ENCODE measurements at regions of chr22 and their contacts with region 1.

Region 1: DNA sequence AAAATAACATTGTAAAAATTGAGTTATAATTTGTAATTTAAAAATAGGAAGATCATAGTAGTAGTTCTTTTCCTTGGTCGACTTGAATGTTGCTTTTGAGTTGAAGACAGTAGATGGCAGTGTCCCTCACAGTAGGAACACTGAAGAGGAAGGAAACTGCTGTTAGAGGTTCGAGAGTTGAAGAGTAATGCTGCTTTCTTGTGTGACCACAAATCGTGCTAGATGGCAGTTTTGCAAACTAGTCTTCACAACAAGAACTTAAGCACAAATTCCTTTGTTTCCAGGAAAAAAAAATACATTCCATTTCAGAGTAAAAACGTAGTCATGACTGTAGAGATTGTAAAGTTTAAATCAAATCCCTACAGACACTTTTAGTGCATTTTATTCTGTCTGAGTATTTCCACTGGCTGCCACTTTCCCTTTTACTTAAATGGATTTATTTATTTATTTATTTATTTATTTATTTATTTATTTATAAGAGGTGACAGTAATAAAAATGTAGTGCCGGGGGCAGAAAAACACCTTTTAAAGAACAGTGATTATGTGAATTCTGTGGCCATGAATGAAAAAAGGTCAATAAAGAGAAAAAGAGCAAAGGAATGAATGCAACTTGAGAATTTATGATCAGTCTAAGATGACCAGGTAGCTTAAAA is 54.6 kb downstream of the SPECC1L start:
- DNase-seq: peak in 1 of 5 donors; percentile 36
- ATAC-seq: peak in 3 of 4 donors; percentile 79 to 89 (median 82)
- H3K4me3 ChIP-seq: no peak overlapping the region
- H3K27ac ChIP-seq: peak overlapping the region in 1 of 12 donors; percentile 54
- H3K4me1 ChIP-seq: peaks cover 0 to 38% (median 15%) of the 10 kb centered on the region in 12 donors
- H3K27me3 ChIP-seq: no peaks in the 10 kb centered on the region
- CTCF ChIP-seq: peak; percentile 61 to 88 (median 74)
- POLR2A ChIP-seq: no peak

Region 2: DNA sequence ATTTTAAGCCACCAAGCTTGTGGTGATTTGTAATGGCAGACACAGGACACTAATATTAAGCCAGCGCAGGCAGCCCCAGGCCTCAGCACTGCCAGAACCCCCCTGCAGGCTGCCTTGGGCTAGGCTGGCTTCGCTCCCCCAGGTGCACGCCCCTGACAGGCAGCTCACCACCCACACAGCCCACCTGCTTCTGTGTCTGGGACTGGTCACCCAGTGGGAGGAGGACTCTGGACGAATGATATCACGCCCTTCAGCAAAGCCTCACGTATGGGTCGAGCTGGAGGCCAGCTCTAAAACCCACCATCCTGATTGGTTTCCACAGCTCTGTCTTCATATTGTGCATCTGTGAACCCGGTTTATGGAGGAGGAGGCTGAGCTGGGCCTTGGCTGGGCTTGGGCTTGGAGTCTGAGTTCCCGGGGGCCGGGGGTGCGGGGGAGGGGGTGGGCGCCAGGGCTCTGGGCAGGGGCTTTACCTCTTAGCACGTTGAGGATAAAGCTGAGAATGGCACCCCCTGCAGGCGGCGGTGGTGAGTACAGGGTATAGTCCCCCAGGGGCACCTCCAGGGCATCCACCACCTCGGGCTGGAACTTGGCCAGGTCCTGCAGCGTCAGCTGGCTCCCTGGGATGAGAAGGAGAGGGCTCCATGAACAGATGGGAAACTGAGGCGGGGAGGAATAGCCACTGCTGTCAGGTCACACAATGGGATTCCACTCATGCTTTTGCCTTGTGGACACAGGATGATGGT is 94.1 kb before region 1 on chr22:
- intact Hi-C with region 1: no loop called
- DNase-seq: peak in 2 of 5 donors; percentile 50 to 76
- ATAC-seq: peak in 3 of 4 donors; percentile 14 to 48 (median 38)
- H3K4me3 ChIP-seq: no peak overlapping the region
- H3K27ac ChIP-seq: no peak overlapping the region
- H3K4me1 ChIP-seq: peaks cover 0 to 10% (median 0%) of the 10 kb centered on the region in 12 donors
- H3K27me3 ChIP-seq: no peaks in the 10 kb centered on the region
- CTCF ChIP-seq: peak in 8 of 12 donors; percentile 9 to 40 (median 23)
- POLR2A ChIP-seq: no peak

Region 3: GRCh38 chr22:24379536-24379935 is 54.3 kb after region 1 on chr22:
- intact Hi-C with region 1: no loop called
- DNase-seq: no peak
- ATAC-seq: no peak
- H3K4me3 ChIP-seq: no peak overlapping the region
- H3K27ac ChIP-seq: peak overlapping the region in 2 of 12 donors; percentile 12 to 35
- H3K4me1 ChIP-seq: peaks cover 0 to 20% (median 5%) of the 10 kb centered on the region in 12 donors
- H3K27me3 ChIP-seq: no peaks in the 10 kb centered on the region
- CTCF ChIP-seq: no peak
- POLR2A ChIP-seq: no peak

Region 4: GRCh38 chr22:24402460-24403192 is 77.4 kb after region 1 on chr22:
- intact Hi-C with region 1: loop called in 2 of 10 experiments (anchors 5 to 10 kb)
- DNase-seq: peak; percentile 80 to 91 (median 87)
- ATAC-seq: peak; percentile 91 to 94 (median 93)
- H3K4me3 ChIP-seq: peak overlapping the region in 5 of 12 donors; percentile 14 to 37 (median 21)
- H3K27ac ChIP-seq: peak overlapping the region; percentile 47 to 93 (median 82)
- H3K4me1 ChIP-seq: peaks cover 0 to 72% (median 64%) of the 10 kb centered on the region in 12 donors
- H3K27me3 ChIP-seq: no peaks in the 10 kb centered on the region
- CTCF ChIP-seq: no peak
- POLR2A ChIP-seq: no peak

Region 5: DNA sequence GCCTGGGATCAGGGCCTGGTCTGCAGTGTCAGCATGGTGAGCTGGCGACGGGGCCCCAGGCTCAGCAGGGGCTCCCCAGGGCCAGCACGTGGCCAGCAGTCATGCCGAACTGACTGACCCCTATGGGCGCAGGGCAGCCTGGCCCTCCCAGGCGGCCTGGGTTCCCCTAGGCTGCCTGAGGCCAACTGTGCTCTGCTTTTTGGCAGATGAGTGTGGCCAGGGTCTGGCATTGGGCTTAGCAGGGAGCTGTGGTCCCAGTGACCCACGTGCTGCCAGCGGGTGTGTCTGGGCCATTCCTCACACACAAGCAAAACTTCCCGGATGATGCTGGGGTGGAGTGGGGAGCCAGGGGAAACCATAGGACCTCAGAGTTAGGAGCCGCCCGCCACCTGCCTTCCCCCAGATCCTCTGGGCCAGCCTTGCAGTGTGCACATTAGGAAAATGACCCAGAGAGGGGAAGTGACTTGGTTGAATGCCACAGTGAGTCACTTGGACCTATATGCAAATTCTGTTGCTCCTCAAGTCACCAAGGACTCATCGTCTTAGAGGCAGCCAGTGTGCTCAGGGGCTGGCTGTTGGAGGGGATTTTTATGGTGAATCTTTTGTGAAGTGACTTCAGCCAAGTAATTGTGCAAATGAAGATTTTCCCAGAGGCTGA is 108.7 kb after region 1 on chr22:
- intact Hi-C with region 1: loop called in 1 of 10 experiments (anchors 5 kb)
- DNase-seq: peak in 2 of 5 donors; percentile 49 to 56
- ATAC-seq: peak in 3 of 4 donors; percentile 16 to 33 (median 21)
- H3K4me3 ChIP-seq: no peak overlapping the region
- H3K27ac ChIP-seq: peak overlapping the region in 11 of 12 donors; percentile 30 to 82 (median 68)
- H3K4me1 ChIP-seq: peaks cover 6 to 87% (median 64%) of the 10 kb centered on the region in 12 donors
- H3K27me3 ChIP-seq: no peaks in the 10 kb centered on the region
- CTCF ChIP-seq: no peak
- POLR2A ChIP-seq: no peak

Region 6: GRCh38 chr22:24503137-24503842 is 178.1 kb after region 1 on chr22:
- intact Hi-C with region 1: loop called in 6 of 10 experiments (anchors 5 to 10 kb)
- DNase-seq: peak; percentile 53 to 78 (median 64)
- ATAC-seq: peak in 3 of 4 donors; percentile 69 to 79 (median 76)
- H3K4me3 ChIP-seq: no peak overlapping the region
- H3K27ac ChIP-seq: no peak overlapping the region
- H3K4me1 ChIP-seq: peaks cover 0 to 37% (median 13%) of the 10 kb centered on the region in 12 donors
- H3K27me3 ChIP-seq: no peaks in the 10 kb centered on the region
- CTCF ChIP-seq: peak; percentile 51 to 73 (median 66)
- POLR2A ChIP-seq: no peak

Region 7: GRCh38 chr22:24525416-24526037 is 200.3 kb after region 1 on chr22:
- intact Hi-C with region 1: loop called in 8 of 10 experiments (anchors 1 to 5 kb)
- DNase-seq: peak; percentile 66 to 84 (median 76)
- ATAC-seq: peak in 3 of 4 donors; percentile 83 to 86 (median 86)
- H3K4me3 ChIP-seq: no peak overlapping the region
- H3K27ac ChIP-seq: no peak overlapping the region
- H3K4me1 ChIP-seq: peaks cover 0 to 27% (median 11%) of the 10 kb centered on the region in 12 donors
- H3K27me3 ChIP-seq: no peaks in the 10 kb centered on the region
- CTCF ChIP-seq: peak; percentile 73 to 90 (median 84)
- POLR2A ChIP-seq: no peak